Activated CD4-positive, alpha-beta T cell treated with anti-CD3 and anti-CD28 coated beads for 36 hours (primary cell): ENCODE measurements at regions of chr5 and their contacts with region 1.

Region 1: DNA sequence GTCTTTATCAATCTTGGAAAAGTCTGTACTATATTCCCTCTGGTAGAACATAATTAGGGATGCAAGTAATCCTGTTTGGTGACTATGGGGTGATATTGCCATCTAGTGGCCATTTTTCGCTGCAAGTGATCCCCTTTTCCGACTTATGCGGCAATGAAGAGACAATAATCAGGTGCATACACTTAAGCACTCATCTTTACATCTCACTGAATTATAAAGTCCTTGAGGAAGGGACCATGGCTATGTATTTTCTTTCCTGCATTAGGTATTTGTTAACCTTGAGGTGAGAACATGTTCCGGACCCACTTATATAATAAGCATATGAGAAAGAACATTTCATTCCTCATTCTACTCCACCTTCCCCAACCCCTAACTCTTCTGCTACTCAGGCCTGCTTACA is 19.6 kb upstream of the LIX1 start:
- DNase-seq: peak; percentile 70
- ATAC-seq: peak; percentile 49
- H3K4me3 Mint-ChIP-seq: no peak overlapping the region
- H3K27ac Mint-ChIP-seq: no peak overlapping the region
- H3K4me1 Mint-ChIP-seq: peaks cover 16% of the 10 kb centered on the region
- H3K27me3 Mint-ChIP-seq: no peaks in the 10 kb centered on the region

Region 2: GRCh38 chr5:96734871-96735325 is 427.1 kb before region 1 on chr5:
- CTCF ChIA-PET with region 1: no interaction called
- POLR2A ChIA-PET with region 1: no interaction called
- intact Hi-C with region 1: no loop called
- DNase-seq: no peak
- ATAC-seq: no peak
- H3K4me3 Mint-ChIP-seq: no peak overlapping the region
- H3K27ac Mint-ChIP-seq: no peak overlapping the region
- H3K4me1 Mint-ChIP-seq: peaks cover 7% of the 10 kb centered on the region
- H3K27me3 Mint-ChIP-seq: no peaks in the 10 kb centered on the region

Region 3: DNA sequence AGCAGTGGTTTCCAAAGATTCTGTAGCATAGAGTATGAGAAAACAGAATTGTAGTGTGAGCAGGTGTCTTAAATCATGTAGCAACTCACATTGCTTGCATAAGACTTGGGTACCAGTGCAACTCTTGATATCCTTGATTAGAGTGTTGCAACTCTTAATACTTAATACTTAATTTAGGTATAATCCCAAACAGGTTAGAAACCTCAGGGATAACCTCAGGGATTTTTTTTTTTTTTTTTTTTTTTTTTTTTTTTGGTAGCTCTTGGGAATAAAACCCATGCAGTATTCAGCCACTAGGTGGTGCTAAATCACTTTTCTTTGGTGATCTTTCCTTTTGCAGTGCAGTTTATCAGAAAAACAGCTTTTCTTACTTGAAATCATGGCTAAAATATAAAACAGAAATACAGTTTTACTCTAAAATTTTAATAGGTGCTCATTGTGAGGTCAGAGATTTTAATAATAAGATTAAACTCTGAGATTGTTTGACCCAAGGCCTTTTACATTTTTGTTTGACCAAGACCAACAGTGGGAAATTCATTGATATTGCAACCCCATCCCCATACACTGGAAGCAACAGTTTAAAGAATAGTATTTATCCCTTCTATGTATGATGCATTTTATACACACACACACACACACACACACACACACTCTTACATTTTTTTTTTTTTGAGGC is 409.6 kb before region 1 on chr5:
- CTCF ChIA-PET with region 1: interaction called, 29 read pairs
- POLR2A ChIA-PET with region 1: no interaction called
- intact Hi-C with region 1: loop called (anchors 1 kb)
- DNase-seq: peak; percentile 36
- ATAC-seq: no peak
- H3K4me3 Mint-ChIP-seq: no peak overlapping the region
- H3K27ac Mint-ChIP-seq: no peak overlapping the region
- H3K4me1 Mint-ChIP-seq: peaks cover 18% of the 10 kb centered on the region
- H3K27me3 Mint-ChIP-seq: no peaks in the 10 kb centered on the region

Region 4: GRCh38 chr5:96807075-96807654 is 354.9 kb before region 1 on chr5:
- CTCF ChIA-PET with region 1: interaction called, 8 read pairs
- POLR2A ChIA-PET with region 1: no interaction called
- intact Hi-C with region 1: loop called (anchors 2 to 5 kb)
- DNase-seq: peak; percentile 65
- ATAC-seq: peak; percentile 5
- H3K4me3 Mint-ChIP-seq: peak overlapping the region; percentile 89
- H3K27ac Mint-ChIP-seq: peak overlapping the region; percentile 94
- H3K4me1 Mint-ChIP-seq: peaks cover 55% of the 10 kb centered on the region
- H3K27me3 Mint-ChIP-seq: no peaks in the 10 kb centered on the region

Region 5: DNA sequence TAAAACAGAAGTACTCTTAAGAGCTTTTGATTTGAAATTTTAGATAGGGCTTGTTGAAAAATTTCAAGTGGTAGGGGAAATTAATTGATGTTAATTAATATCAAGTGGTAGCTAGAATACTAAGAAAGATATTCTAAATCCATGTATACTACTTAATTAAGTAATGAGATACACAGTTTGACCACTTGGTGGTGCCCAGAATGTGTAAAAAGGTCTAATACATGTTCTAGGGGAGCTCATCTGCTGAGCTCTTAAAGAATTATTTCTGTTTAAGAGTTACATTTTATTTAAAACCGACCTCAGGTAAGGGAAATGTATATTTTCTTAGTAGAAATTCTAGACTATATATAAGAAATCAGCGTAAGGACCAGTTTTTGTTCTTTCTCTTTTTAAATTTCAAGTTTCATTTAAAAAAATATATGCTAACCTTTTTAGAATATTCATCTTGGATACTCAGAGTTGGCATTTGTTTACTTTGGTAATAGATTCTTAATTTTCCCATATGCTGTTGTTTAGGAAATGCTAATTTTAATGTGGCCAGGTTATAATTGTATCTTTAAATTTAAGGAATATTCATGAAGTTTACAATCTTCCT is 164.7 kb before region 1 on chr5:
- CTCF ChIA-PET with region 1: interaction called, 38 read pairs
- POLR2A ChIA-PET with region 1: no interaction called
- intact Hi-C with region 1: loop called (anchors 1 to 2 kb)
- DNase-seq: peak; percentile 30
- ATAC-seq: peak; percentile 63
- H3K4me3 Mint-ChIP-seq: no peak overlapping the region
- H3K27ac Mint-ChIP-seq: no peak overlapping the region
- H3K4me1 Mint-ChIP-seq: peaks cover 19% of the 10 kb centered on the region
- H3K27me3 Mint-ChIP-seq: no peaks in the 10 kb centered on the region

Region 6: GRCh38 chr5:97101189-97101910 is 60.7 kb before region 1 on chr5:
- CTCF ChIA-PET with region 1: interaction called, 17 read pairs
- POLR2A ChIA-PET with region 1: no interaction called
- intact Hi-C with region 1: no loop called
- DNase-seq: no peak
- ATAC-seq: no peak
- H3K4me3 Mint-ChIP-seq: no peak overlapping the region
- H3K27ac Mint-ChIP-seq: no peak overlapping the region
- H3K4me1 Mint-ChIP-seq: no peaks in the 10 kb centered on the region
- H3K27me3 Mint-ChIP-seq: peaks cover 12% of the 10 kb centered on the region

Region 7: DNA sequence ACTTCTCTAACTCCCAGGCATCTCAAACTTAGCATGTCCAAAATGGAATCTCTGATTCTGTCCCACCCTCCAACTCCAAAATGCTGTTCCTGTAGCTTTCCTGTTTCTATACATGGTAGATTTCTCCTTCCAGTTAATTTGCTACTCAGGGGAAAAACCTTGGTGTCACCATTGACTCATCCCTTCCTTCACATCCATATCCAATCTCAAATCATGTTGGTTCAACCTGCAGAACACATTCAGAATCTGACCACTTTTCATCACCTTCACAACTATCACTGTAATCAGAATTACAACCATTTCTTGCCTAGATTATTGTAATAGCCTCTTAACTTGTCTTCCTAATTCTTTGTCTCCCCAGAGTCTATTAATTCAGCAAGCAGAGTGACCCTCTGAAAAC is 10.2 kb after region 1 on chr5:
- CTCF ChIA-PET with region 1: interaction called, 15 read pairs
- POLR2A ChIA-PET with region 1: interaction called, 3 read pairs
- intact Hi-C with region 1: no loop called
- DNase-seq: no peak
- ATAC-seq: peak; percentile 63
- H3K4me3 Mint-ChIP-seq: no peak overlapping the region
- H3K27ac Mint-ChIP-seq: peak overlapping the region; percentile 85
- H3K4me1 Mint-ChIP-seq: peaks cover 22% of the 10 kb centered on the region
- H3K27me3 Mint-ChIP-seq: no peaks in the 10 kb centered on the region

Region 8: DNA sequence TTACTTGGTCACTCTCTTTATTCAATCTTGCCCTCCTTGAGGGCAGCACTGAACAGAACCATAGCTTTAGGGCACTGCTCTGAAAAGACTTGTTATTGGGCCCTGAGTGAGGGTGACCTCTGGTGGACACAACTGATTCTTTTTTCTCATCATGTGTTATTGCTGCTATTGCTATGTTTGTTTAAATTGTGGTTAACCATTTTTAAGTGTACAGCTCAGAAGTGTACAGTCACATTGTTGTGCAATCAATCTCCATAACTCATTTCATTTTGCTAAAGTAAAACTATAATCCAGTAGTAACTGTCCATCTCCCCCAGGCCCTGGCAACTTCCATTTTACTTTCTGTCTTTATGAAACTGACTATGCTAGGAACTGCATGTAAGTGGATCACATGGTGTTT is 372.1 kb after region 1 on chr5:
- CTCF ChIA-PET with region 1: no interaction called
- POLR2A ChIA-PET with region 1: no interaction called
- intact Hi-C with region 1: no loop called
- DNase-seq: no peak
- ATAC-seq: peak; percentile 36
- H3K4me3 Mint-ChIP-seq: no peak overlapping the region
- H3K27ac Mint-ChIP-seq: no peak overlapping the region
- H3K4me1 Mint-ChIP-seq: no peaks in the 10 kb centered on the region
- H3K27me3 Mint-ChIP-seq: peaks cover 3% of the 10 kb centered on the region